ENCODE measurements at regions of chr15 and their contacts with region 1.

Region 1: GRCh38 chr15:65862682-65863081 is 6.6 kb upstream of the RAB11A start:
- DNase-seq: peak; percentile 90
- H3K4me3 ChIP-seq: no peak overlapping the region
- H3K27ac ChIP-seq: no peak overlapping the region
- H3K4me1 ChIP-seq: no peaks in the 10 kb centered on the region
- H3K27me3 ChIP-seq: no peaks in the 10 kb centered on the region
- CTCF ChIP-seq: peak; percentile 77

Region 2: DNA sequence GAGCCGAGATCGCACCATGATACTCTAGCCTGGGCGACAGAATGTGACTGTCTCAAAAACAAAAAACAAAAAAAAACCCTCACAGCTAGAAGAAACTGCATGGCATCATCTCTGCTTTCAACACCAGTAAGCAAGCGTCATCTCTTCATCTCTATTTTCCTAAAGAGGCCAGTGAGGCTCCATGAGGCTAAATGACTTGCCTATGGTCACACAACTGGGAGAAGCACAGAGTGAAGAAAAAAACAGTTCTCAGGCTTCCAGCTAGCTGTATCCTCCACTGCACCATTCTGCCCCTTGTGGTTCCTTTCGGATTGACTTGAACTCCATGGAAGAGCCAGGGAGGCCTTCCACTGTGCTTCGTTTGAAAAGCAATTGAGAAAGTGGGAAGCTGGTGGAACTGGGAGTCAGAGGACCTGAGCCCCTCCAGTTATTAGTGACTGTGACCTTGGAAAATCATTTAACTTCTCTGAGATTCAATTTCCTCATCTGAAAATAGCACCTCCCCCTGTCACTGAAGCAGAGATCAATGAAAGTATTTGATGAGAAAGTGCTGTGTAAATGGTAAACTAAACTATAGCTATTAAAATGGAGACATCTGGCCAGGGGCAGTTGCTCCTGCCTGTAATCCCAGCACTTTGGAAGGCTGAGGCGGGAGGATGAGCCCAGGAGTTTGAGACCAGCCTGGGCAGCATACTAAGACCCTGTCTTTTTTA is 38.5 kb before region 1 on chr15:
- CTCF ChIA-PET with region 1: interaction called, 13 read pairs
- POLR2A ChIA-PET with region 1: no interaction called
- intact Hi-C with region 1: no loop called
- DNase-seq: peak; percentile 67
- H3K4me3 ChIP-seq: no peak overlapping the region
- H3K27ac ChIP-seq: no peak overlapping the region
- H3K4me1 ChIP-seq: no peaks in the 10 kb centered on the region
- H3K27me3 ChIP-seq: no peaks in the 10 kb centered on the region
- CTCF ChIP-seq: peak; percentile 71

Region 3: DNA sequence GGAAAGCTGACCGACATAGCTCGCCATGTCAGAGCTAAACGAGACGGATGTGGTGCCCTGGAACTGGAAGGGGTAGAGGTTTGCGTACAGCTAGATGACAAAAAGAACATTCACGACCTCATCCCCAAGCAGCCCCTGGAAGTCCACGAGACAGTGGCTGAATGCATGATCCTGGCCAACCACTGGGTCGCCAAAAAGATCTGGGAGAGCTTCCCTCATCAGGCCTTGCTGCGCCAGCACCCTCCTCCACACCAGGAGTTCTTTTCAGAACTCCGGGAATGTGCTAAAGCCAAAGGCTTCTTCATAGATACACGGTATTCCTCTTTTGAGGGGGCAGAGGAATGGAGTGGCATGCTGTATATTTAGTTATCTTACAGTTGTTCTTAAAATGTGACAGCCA is 463.4 kb after region 1 on chr15:
- CTCF ChIA-PET with region 1: no interaction called
- POLR2A ChIA-PET with region 1: no interaction called
- intact Hi-C with region 1: no loop called
- DNase-seq: no peak
- H3K4me3 ChIP-seq: no peak overlapping the region
- H3K27ac ChIP-seq: no peak overlapping the region
- H3K4me1 ChIP-seq: no peaks in the 10 kb centered on the region
- H3K27me3 ChIP-seq: no peaks in the 10 kb centered on the region
- CTCF ChIP-seq: no peak

Measured in A673 (cell line).